K562 (cell line): ENCODE measurements at regions of chr2 and their contacts with region 1.

Region 1: DNA sequence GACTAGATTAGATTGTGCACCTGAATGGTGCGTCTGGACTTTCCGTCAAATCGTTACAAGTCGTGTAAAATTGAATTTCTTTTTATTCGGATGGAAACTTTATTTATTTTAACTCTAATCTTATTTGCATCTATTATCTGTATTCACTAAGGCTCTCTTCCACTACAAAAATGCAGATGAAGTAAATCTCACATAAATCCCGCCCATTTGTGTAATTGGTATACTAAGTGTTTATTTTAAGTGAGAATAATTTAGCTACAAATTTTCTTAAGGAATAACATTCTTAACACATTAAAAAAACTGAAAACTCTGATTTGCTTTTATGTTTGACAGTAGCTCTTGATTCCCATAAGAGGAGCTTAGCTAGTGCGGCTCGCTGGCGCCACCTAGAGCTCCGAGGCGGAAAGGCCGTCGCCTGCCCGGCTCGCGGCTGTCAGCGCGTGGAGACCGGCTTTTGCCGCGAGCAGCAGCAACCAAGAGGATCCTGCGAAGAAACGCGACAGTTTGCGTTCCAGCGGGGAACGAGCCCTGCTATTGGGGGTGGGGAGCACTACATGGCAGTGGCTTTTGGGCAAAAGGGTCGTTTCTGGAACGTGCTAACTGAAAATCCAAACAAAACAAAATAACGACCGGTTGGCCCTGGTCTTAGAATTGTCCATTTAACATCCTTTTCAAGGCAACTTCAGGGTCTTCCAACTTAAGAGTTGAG is 6.7 kb downstream of the SP9 start:
- DNase-seq: peak; percentile 81 to 88 (median 84)
- ATAC-seq: peak; percentile 79
- H3K4me3 ChIP-seq: no peak overlapping the region
- H3K27ac ChIP-seq: no peak overlapping the region
- H3K4me1 ChIP-seq: peaks cover 5 to 44% of the 10 kb centered on the region in 2 experiments; a peak in 3 of 5 replicates
- H3K27me3 ChIP-seq: peaks cover 0 to 18% of the 10 kb centered on the region in 2 experiments; a peak in 3 of 5 replicates
- CTCF ChIP-seq: peak; percentile 96 to 99 (median 97)
- EP300 ChIP-seq: no peak
- POLR2A ChIP-seq: no peak
- RAD21 ChIP-seq: peak; percentile 98 to 99

Region 2: DNA sequence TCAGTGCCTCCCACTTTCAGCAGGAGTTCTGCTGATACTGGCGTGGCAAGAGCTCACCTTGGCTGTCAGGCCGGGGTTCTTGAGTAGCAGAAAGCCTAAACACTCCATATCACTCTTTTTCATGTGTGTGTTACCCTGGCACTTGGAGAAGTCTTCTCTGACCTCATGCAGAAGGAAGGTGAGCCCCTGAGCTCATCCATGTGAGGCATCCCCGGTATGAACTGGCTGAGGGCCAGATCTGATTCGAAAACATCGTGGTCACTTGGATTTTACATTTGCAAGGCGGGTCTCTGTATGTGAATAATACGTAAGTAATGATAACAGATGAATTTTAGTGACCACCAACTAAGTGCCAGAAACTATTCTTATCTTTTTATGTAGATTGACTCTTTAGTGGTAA is 1512.2 kb before region 1 on chr2:
- CTCF ChIA-PET with region 1: no interaction called
- POLR2A ChIA-PET with region 1: no interaction called
- in situ Hi-C with region 1: no loop called
- intact Hi-C with region 1: no loop called
- DNase-seq: no peak
- ATAC-seq: no peak
- H3K4me3 ChIP-seq: no peak overlapping the region
- H3K27ac ChIP-seq: no peak overlapping the region
- H3K4me1 ChIP-seq: no peaks in the 10 kb centered on the region
- H3K27me3 ChIP-seq: peaks cover 0 to 3% of the 10 kb centered on the region in 2 experiments; a peak in 3 of 5 replicates
- CTCF ChIP-seq: no peak
- EP300 ChIP-seq: no peak
- POLR2A ChIP-seq: no peak
- RAD21 ChIP-seq: no peak

Region 3: GRCh38 chr2:172864182-172864581 is 1477.3 kb before region 1 on chr2:
- CTCF ChIA-PET with region 1: interaction called, 4 read pairs
- POLR2A ChIA-PET with region 1: no interaction called
- in situ Hi-C with region 1: no loop called
- intact Hi-C with region 1: loop called (anchors 5 kb)
- DNase-seq: peak; percentile 42 to 66 (median 56)
- ATAC-seq: peak; percentile 95
- H3K4me3 ChIP-seq: no peak overlapping the region
- H3K27ac ChIP-seq: no peak overlapping the region
- H3K4me1 ChIP-seq: no peaks in the 10 kb centered on the region
- H3K27me3 ChIP-seq: no peaks in the 10 kb centered on the region; a peak in 2 of 5 replicates
- CTCF ChIP-seq: peak; percentile 76 to 87 (median 86)
- EP300 ChIP-seq: no peak
- POLR2A ChIP-seq: no peak
- RAD21 ChIP-seq: peak; percentile 78 to 92

Region 4: GRCh38 chr2:173402405-173402974 is 939.0 kb before region 1 on chr2:
- CTCF ChIA-PET with region 1: interaction called, 4 read pairs
- POLR2A ChIA-PET with region 1: no interaction called
- in situ Hi-C with region 1: loop called (anchors 5 kb)
- intact Hi-C with region 1: loop called (anchors 1 kb)
- DNase-seq: peak; percentile 71 to 88 (median 80)
- ATAC-seq: peak; percentile 98
- H3K4me3 ChIP-seq: no peak overlapping the region
- H3K27ac ChIP-seq: no peak overlapping the region
- H3K4me1 ChIP-seq: no peaks in the 10 kb centered on the region
- H3K27me3 ChIP-seq: peaks cover 29 to 40% of the 10 kb centered on the region in 2 experiments
- CTCF ChIP-seq: peak; percentile 93 to 96 (median 94)
- EP300 ChIP-seq: no peak
- POLR2A ChIP-seq: no peak
- RAD21 ChIP-seq: peak; percentile 94 to 98

Region 5: DNA sequence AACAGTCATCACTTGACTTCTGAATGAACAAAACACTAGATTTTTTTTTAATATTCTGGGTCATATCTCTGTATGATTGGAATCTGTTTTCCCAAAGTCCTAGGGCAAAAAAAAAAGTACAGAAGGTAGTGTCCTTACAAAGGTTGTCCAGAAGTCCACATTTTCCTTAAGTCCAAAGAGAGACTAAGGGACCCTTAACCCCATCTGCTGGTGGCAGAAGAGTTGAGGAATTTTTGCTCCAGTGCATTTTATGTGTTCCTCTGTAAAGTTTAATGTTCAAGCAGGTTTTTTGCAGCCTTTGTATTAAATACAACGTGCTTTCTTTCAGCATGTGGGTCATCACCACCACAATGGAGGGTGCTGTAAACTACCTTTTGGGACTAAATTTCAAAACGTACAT is 592.1 kb before region 1 on chr2:
- CTCF ChIA-PET with region 1: no interaction called
- POLR2A ChIA-PET with region 1: no interaction called
- in situ Hi-C with region 1: no loop called
- intact Hi-C with region 1: loop called (anchors 10 kb)
- DNase-seq: no peak
- ATAC-seq: no peak
- H3K4me3 ChIP-seq: no peak overlapping the region
- H3K27ac ChIP-seq: no peak overlapping the region
- H3K4me1 ChIP-seq: no peaks in the 10 kb centered on the region
- H3K27me3 ChIP-seq: peaks cover 15 to 27% of the 10 kb centered on the region in 2 experiments
- CTCF ChIP-seq: peak in 2 of 3 experiments; percentile 16 to 35; a peak in 2 of 6 replicates
- EP300 ChIP-seq: no peak
- POLR2A ChIP-seq: no peak
- RAD21 ChIP-seq: peak; percentile 8 to 39; a peak in 2 of 4 replicates

Region 6: GRCh38 chr2:173965329-173966025 is 376.0 kb before region 1 on chr2 and contains the start of gene SP3:
- CTCF ChIA-PET with region 1: no interaction called
- POLR2A ChIA-PET with region 1: no interaction called
- in situ Hi-C with region 1: no loop called
- intact Hi-C with region 1: loop called (anchors 10 kb)
- DNase-seq: peak; percentile 98 to 99 (median 99)
- ATAC-seq: peak; percentile 88
- H3K4me3 ChIP-seq: peak within 1 kb of the TSS; percentile 97
- H3K27ac ChIP-seq: peak within 1 kb of the TSS; percentile 96
- H3K4me1 ChIP-seq: peaks cover 8 to 22% of the 10 kb centered on the region in 2 experiments; a peak in 4 of 5 replicates
- H3K27me3 ChIP-seq: no peaks in the 10 kb centered on the region
- CTCF ChIP-seq: no peak
- EP300 ChIP-seq: 0 out of 2 replicates have a peak, but pooled peaks have one; percentile 2
- POLR2A ChIP-seq: peak; percentile 93
- RAD21 ChIP-seq: peak in 1 of 2 experiments; percentile 24; a peak in 2 of 4 replicates
- polyA plus RNA-seq, gene SP3: 12.0 to 13.1 TPM

Region 7: GRCh38 chr2:174051741-174052583 is 289.5 kb before region 1 on chr2:
- CTCF ChIA-PET with region 1: no interaction called
- POLR2A ChIA-PET with region 1: no interaction called
- in situ Hi-C with region 1: loop called (anchors 10 kb)
- intact Hi-C with region 1: loop called (anchors 5 kb)
- DNase-seq: peak in 3 of 4 experiments; percentile 34 to 85 (median 81)
- ATAC-seq: peak; percentile 96
- H3K4me3 ChIP-seq: no peak overlapping the region
- H3K27ac ChIP-seq: peak overlapping the region; percentile 6; the same call in 2 of the 3 replicates
- H3K4me1 ChIP-seq: peaks cover 13 to 14% of the 10 kb centered on the region in 2 experiments
- H3K27me3 ChIP-seq: no peaks in the 10 kb centered on the region
- CTCF ChIP-seq: peak in 1 of 3 experiments; percentile 36; a peak in 1 of 6 replicates
- EP300 ChIP-seq: peak; percentile 49; the same call in 1 of the 2 replicates
- POLR2A ChIP-seq: no peak
- RAD21 ChIP-seq: peak in 1 of 2 experiments; percentile 30; a peak in 3 of 4 replicates

Region 8: GRCh38 chr2:174158003-174158402 is 183.4 kb before region 1 on chr2:
- CTCF ChIA-PET with region 1: interaction called, 44 read pairs
- POLR2A ChIA-PET with region 1: no interaction called
- in situ Hi-C with region 1: no loop called
- intact Hi-C with region 1: loop called (anchors 1 kb)
- DNase-seq: peak; percentile 64 to 78 (median 68)
- ATAC-seq: peak; percentile 94
- H3K4me3 ChIP-seq: no peak overlapping the region
- H3K27ac ChIP-seq: no peak overlapping the region
- H3K4me1 ChIP-seq: peaks cover 6 to 18% of the 10 kb centered on the region in 2 experiments; a peak in 4 of 5 replicates
- H3K27me3 ChIP-seq: no peaks in the 10 kb centered on the region
- CTCF ChIP-seq: peak; percentile 68 to 73 (median 70)
- EP300 ChIP-seq: no peak
- POLR2A ChIP-seq: no peak
- RAD21 ChIP-seq: peak; percentile 59 to 88